T-cell (primary cell): ENCODE measurements at regions of chr7 and their contacts with region 1.

Region 1: GRCh38 chr7:129258649-129259389 is 34.0 kb downstream of the AHCYL2 start:
- DNase-seq: peak in 1 of 35 experiments; percentile 15
- ATAC-seq: peak in 1 of 4 experiments; percentile 52
- H3K4me3 ChIP-seq: no peak overlapping the region
- H3K4me3 Mint-ChIP-seq: peak overlapping the region; percentile 44 to 68 (median 55)
- H3K27ac ChIP-seq: no peak overlapping the region
- H3K27ac Mint-ChIP-seq: peak overlapping the region; percentile 59 to 65
- H3K4me1 ChIP-seq: peaks cover 6 to 14% of the 10 kb centered on the region in 2 experiments
- H3K4me1 Mint-ChIP-seq: peaks cover 34 to 55% (median 39%) of the 10 kb centered on the region in 3 donors
- H3K27me3 ChIP-seq: no peaks in the 10 kb centered on the region
- H3K27me3 Mint-ChIP-seq: no peaks in the 10 kb centered on the region

Region 2: GRCh38 chr7:129150199-129150996 is 108.4 kb before region 1 on chr7:
- CTCF ChIA-PET with region 1: no interaction called
- POLR2A ChIA-PET with region 1: interaction called in 1 of 2 experiments, 10 read pairs
- DNase-seq: no peak
- ATAC-seq: no peak
- H3K4me3 ChIP-seq: no peak overlapping the region
- H3K4me3 Mint-ChIP-seq: no peak overlapping the region
- H3K27ac ChIP-seq: no peak overlapping the region
- H3K27ac Mint-ChIP-seq: no peak overlapping the region
- H3K4me1 ChIP-seq: peaks cover 0 to 7% of the 10 kb centered on the region in 2 experiments
- H3K4me1 Mint-ChIP-seq: peaks cover 5 to 14% (median 9%) of the 10 kb centered on the region in 3 donors
- H3K27me3 ChIP-seq: peaks cover 0 to 10% of the 10 kb centered on the region in 2 experiments
- H3K27me3 Mint-ChIP-seq: peaks cover 0 to 16% of the 10 kb centered on the region in 2 donors